Dendritic cell treated with granulocyte-macrophage colony-stimulating factor and Interleukin-4, amounts not matched to agents 40 ng/mL and 50 ng/mL, for 4 days (primary cell): ENCODE measurements at regions of chr2 and their contacts with region 1.

Region 1: DNA sequence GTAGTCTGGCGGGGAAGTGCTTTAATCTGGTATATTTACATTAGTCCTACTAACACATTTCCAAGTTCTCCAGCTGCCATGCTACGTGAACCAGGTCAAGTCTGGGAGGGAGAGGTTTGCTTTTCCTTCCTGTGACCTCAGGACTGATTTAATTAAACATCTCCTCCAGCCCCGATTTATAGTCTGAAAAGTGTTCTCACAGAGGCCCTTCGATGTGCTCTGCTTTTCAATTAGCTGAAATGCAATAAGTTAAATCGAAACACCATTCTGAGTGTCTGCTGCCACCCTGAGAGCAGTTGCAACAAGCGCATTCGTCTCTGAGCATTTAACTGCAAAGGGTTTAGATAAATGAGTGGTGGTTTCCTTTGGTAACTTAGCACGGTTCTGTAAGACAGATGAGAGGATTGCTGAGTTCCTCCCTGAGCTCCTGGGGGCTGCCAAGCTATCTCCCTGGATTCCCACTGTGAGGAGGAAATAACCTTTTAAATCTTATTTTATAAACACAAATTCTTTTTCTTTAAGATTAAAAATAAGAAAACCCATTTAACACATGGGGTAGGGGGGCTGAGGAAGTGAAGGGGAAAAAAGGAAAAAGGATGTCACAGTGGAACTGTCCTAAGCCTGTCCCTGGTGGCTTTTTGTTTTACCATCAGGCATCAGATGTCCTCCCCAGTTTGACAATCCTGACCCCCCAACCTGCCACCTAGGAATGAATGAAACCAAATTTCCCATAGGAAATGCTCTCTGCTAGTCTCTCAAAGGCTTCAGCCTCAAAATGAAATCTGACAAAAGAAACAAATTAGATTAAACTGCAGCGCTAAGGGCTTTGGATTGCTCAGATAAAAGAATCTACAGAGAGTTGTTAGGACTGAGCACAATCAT is 56.5 kb upstream of the CREB1 start:
- H3K4me3 Mint-ChIP-seq: no peak overlapping the region
- H3K27ac Mint-ChIP-seq: no peak overlapping the region
- H3K4me1 Mint-ChIP-seq: peaks cover 4% of the 10 kb centered on the region
- H3K27me3 Mint-ChIP-seq: no peaks in the 10 kb centered on the region

Region 2: DNA sequence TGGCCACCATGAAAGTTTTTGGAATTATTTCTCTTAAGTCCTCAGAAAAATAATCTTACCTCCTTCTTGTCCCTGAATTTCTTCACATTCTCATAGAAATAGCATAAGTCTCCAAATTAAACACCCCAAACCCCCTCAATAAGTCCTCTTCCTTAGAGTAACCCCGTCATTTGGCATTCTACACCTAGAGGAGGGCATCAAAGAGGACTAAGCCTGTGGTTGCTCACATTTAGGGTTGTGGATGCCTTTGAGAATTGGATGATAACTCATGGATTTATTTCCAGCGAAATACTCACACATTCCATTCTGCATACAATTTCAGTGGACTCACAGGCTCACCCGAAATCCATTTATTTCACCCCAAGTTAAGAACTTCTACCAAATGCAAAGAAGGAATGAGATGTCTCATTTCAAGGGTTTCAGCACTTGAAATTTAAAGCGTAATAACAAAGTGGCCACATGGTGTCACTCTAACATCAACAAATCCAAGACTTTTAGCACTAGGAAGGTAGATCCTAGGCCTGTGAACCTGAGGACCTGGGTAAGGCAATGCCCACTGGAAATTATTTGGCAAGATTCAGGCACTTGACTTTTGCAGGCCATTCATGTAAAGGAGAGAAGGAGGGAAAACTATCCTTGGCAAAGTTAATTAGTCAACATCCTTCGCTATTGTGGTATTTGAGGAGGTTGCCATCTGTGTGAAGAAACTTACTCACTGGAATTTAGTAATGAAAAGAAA is 779.7 kb before region 1 on chr2:
- intact Hi-C with region 1: loop called (anchors 5 kb)
- H3K4me3 Mint-ChIP-seq: no peak overlapping the region
- H3K27ac Mint-ChIP-seq: no peak overlapping the region
- H3K4me1 Mint-ChIP-seq: no peaks in the 10 kb centered on the region
- H3K27me3 Mint-ChIP-seq: peaks cover 2% of the 10 kb centered on the region

Region 3: DNA sequence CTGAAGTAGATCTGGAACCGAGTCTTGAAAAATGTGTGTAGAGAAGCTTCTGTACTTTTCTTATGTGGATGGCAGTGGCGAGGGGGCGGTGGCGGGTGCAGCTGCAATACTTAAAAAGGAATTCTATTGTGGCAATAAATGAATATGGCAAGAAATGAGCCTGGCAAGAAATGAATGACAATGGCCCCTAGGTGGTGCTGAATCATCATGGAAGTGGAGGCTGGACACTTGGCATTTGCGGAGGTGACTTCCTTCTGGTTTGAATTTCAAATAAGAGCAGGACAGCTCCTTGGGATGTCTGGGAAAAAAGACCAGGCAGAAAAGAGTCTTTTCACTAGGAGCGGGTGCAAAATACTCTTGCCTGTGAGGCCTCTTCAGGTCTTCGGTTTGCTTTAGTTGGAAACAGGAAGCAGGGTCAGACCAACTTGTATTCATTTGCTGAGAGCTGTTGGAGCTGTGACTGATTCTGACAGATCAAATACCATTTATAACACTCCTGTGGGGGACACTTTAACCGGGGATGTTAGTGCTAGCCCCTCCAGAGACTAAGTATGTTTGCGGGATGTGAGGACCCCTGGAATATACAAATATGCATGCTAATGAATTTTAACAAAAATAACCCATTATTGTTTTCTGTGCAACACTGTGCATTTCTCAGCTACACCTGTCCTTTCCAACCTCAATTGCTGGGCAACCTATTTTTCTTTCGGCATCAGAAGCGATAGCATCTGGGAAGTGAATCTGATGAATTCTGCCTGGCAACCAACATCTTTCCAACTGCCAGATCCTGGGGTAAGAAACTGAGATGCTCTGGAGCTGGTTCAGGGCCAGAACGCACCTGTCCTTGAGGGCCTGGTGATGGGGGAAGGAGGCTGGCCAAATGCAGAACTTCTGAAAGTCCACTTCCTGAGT is 672.5 kb before region 1 on chr2:
- intact Hi-C with region 1: loop called (anchors 1 kb)
- H3K4me3 Mint-ChIP-seq: peak overlapping the region; percentile 55
- H3K27ac Mint-ChIP-seq: peak overlapping the region; percentile 20
- H3K4me1 Mint-ChIP-seq: peaks cover 29% of the 10 kb centered on the region
- H3K27me3 Mint-ChIP-seq: no peaks in the 10 kb centered on the region

Region 4: GRCh38 chr2:206981739-206982340 is 491.4 kb before region 1 on chr2:
- intact Hi-C with region 1: loop called (anchors 2 kb)
- H3K4me3 Mint-ChIP-seq: no peak overlapping the region
- H3K27ac Mint-ChIP-seq: no peak overlapping the region
- H3K4me1 Mint-ChIP-seq: peaks cover 23% of the 10 kb centered on the region
- H3K27me3 Mint-ChIP-seq: no peaks in the 10 kb centered on the region

Region 5: GRCh38 chr2:206993996-206994463 is 479.3 kb before region 1 on chr2:
- intact Hi-C with region 1: no loop called
- H3K4me3 Mint-ChIP-seq: no peak overlapping the region
- H3K27ac Mint-ChIP-seq: no peak overlapping the region
- H3K4me1 Mint-ChIP-seq: peaks cover 10% of the 10 kb centered on the region
- H3K27me3 Mint-ChIP-seq: no peaks in the 10 kb centered on the region

Region 6: DNA sequence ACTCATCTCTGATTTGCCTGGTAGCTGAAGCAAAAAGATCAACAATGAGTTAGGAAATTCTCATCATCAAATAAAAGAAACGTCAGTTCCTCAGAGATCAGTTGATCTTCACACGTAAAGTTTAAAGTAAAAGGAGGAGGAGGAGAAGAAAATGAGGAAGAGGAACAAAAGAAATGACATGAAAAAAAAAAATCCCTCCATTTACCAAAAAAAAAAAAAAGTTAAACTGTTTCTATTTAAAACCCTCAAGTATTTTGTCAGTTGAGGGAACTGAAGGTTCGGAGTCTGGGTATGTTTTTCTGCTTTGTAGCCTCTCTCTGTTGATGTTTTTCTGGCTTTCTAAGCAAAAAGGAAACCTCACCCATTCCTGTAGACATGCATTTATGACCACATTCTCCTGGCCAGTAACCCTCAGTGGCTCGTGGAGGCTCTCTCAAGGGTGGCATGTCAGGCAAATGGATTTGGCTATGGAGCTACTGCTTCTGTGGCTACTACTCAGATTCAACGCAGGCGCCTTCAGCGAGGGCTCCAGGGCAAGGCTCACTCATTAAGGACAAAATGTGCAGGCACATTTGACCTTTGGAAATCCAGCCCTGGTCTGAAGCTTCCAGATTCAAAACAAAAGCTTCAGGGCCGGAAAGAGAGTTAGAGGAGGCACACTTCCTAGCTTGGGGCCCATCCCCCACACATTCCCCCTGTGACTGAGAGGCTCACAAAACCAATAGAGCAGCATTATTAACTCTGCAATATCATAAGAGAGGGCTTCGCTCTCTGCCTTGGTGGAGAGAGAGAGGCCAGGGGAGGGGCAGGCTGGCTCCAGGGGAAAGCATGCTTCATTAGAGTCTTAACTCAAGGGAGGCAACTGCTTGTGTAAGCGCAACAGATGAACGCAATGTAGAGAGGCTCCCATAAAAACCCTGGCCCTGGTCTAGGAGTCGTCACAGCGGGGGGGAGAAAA is 329.8 kb before region 1 on chr2:
- intact Hi-C with region 1: loop called (anchors 5 kb)
- H3K4me3 Mint-ChIP-seq: peak overlapping the region; percentile 61
- H3K27ac Mint-ChIP-seq: peak overlapping the region; percentile 90
- H3K4me1 Mint-ChIP-seq: peaks cover 75% of the 10 kb centered on the region
- H3K27me3 Mint-ChIP-seq: no peaks in the 10 kb centered on the region

Region 7: GRCh38 chr2:207283356-207283755 is 189.9 kb before region 1 on chr2:
- intact Hi-C with region 1: no loop called
- H3K4me3 Mint-ChIP-seq: no peak overlapping the region
- H3K27ac Mint-ChIP-seq: peak overlapping the region; percentile 71
- H3K4me1 Mint-ChIP-seq: peaks cover 21% of the 10 kb centered on the region
- H3K27me3 Mint-ChIP-seq: no peaks in the 10 kb centered on the region